Gastrocnemius medialis (tissue), 4 donors: ENCODE measurements at regions of chr5 and their contacts with region 1.

Region 1: GRCh38 chr5:172006321-172007174 is at the start of gene FBXW11:
- DNase-seq: peak; percentile 93 to 95
- ATAC-seq: peak; percentile 95 to 96
- H3K4me3 ChIP-seq: peak within 1 kb of the TSS; percentile 80 to 99 (median 98)
- H3K27ac ChIP-seq: peak within 1 kb of the TSS; percentile 89 to 99 (median 94)
- H3K4me1 ChIP-seq: peaks cover 46 to 49% of the 10 kb centered on the region in 2 donors
- H3K27me3 ChIP-seq: no peaks in the 10 kb centered on the region
- CTCF ChIP-seq: peak in 1 of 5 experiments; percentile 9
- POLR2A ChIP-seq: peak; percentile 76 to 77
- total RNA-seq, gene FBXW11: 68.5 to 80.8 (median 72.2) TPM

Region 2: DNA sequence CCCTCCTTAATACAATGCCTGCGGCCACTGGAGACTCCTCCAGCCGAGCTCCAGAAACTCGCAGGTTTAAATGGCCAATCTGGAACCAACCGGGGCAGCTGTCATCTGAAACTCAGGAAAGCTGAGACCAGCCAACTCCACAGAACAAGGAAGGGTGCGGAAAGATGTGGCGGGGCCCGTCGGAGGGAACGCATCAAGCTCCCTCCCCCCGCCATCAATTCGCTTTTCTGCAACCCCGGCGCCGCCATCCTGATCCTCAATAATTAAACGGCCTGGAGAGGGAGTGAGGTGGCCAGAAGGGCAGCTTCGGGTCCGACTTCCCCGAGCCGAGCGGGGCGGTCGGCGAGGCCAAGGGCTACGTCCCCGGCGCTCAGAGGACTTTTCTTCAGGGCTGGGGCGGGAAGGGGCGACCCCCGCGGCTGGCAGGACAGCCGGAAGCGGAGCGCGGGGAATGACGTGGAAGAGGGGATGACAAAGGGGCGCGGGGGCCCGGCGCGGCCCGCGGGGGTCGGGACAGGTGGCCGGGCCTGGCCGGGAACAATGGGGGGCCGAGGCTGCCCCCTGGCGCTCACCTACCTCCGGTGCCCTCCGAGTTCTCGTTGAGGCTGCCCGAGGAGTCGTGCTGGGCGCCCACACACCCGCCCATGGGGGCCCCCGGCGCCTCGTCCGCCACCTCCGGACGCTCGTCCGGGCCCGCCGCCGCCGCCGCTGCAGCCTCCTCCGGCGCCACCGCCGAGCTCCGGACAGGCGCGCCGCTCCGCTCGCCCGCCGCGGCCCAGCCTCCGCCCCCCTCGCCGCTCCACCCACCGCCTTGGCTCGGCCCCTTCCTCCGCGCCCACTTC is 276.7 kb after region 1 on chr5 and contains the start of gene UBTD2:
- in situ Hi-C with region 1: no loop called
- intact Hi-C with region 1: loop called (anchors 2 kb)
- DNase-seq: peak; percentile 64 to 73
- ATAC-seq: peak; percentile 90 to 92
- H3K4me3 ChIP-seq: peak within 1 kb of the TSS; percentile 85 to 100 (median 91)
- H3K27ac ChIP-seq: peak within 1 kb of the TSS; percentile 91 to 98 (median 94)
- H3K4me1 ChIP-seq: peaks cover 16 to 21% of the 10 kb centered on the region in 2 donors
- H3K27me3 ChIP-seq: no peaks in the 10 kb centered on the region
- CTCF ChIP-seq: peak; percentile 39 to 73 (median 58)
- POLR2A ChIP-seq: no peak
- total RNA-seq, gene UBTD2: 6.0 to 11.4 (median 9.8) TPM